Mucosa of descending colon (tissue), 3 donors: ENCODE measurements at regions of chr12 and their contacts with region 1.

Region 1: GRCh38 chr12:95815635-95816212 is 25.2 kb upstream of the NTN4 start:
- DNase-seq: no peak
- ATAC-seq: peak; percentile 54
- H3K4me3 ChIP-seq: no peak overlapping the region
- H3K4me1 ChIP-seq: no peaks in the 10 kb centered on the region
- CTCF ChIP-seq: peak; percentile 25

Region 2: DNA sequence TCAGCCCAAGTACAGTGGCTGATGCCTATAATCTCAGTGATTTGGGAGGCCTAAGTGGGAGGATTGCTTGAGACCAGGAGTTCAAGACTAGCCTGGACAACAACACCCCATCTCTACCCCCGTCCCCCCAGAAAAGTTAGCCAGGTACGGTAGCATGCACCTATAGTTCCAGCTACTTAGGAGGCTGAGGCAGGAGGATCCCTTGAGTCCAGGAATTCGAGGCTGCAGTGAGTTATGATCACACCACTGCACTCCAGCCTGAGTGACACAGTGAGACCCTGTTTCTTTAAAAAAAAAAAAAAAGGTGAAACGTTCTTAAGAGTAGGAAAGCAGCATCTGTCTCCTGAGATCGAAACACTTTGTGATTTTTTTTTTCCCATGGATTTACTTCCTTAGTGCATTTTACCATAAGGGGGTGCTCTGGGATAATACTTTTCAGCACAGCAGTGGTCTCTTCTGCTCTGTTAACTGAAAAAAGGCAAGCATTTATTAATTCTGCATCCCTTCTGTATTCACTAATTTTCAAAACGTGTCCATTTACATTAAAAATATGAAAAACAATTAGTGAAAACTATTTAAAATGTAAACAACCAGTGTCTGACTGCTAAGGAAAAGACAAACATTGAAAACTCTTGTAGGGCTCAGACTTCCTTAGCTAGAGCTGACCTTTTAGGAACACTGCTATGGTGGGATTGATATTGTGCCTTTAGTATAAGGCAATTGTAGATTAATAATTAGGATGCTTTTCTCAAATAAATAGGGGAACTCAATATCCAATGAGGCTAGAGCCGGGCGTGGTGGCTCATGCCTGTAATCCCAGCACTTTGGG is 233.3 kb before region 1 on chr12:
- intact Hi-C with region 1: loop called in 1 of 2 experiments (anchors 10 kb)
- DNase-seq: no peak
- ATAC-seq: no peak
- H3K4me3 ChIP-seq: no peak overlapping the region
- H3K4me1 ChIP-seq: no peaks in the 10 kb centered on the region
- CTCF ChIP-seq: no peak

Region 3: GRCh38 chr12:95623585-95624042 is 192.1 kb before region 1 on chr12:
- intact Hi-C with region 1: loop called in 1 of 2 experiments (anchors 10 kb)
- DNase-seq: peak; percentile 66 to 87 (median 78)
- ATAC-seq: peak; percentile 90
- H3K4me3 ChIP-seq: no peak overlapping the region
- H3K4me1 ChIP-seq: no peaks in the 10 kb centered on the region
- CTCF ChIP-seq: peak; percentile 56

Region 4: DNA sequence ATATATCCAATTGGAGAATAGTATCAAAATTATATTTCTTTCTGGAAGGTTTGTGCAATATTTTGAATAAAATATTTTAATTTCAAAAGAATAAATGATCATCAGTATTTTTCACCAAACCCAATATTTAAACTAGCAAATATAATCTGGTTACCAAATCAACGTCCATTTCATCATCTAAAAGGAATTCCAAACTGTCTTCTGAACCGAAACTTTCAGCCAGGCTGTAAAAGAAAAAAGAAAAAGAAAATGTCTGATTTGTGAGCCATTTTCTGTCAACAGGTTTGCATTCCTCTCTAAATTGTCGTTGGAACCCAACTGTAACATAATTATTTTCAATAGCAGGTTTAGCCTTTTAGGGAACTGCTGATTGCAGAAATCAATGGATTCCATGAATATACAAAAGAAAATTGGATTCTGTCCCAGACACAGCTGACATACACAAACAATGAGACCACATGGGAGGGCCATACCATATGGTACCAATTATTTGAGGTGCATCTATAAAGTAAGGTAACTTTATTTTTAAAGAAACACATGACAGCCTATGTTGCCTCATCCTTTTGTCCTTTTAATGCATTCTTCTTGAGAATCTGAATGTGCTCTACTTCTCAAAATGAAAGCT is 65.7 kb after region 1 on chr12:
- intact Hi-C with region 1: no loop called
- DNase-seq: no peak
- ATAC-seq: no peak
- H3K4me3 ChIP-seq: no peak overlapping the region
- H3K4me1 ChIP-seq: peaks cover 4% of the 10 kb centered on the region
- CTCF ChIP-seq: no peak